Endothelial cell of umbilical vein (primary cell): ENCODE measurements at regions of chr12 and their contacts with region 1.

Region 1: DNA sequence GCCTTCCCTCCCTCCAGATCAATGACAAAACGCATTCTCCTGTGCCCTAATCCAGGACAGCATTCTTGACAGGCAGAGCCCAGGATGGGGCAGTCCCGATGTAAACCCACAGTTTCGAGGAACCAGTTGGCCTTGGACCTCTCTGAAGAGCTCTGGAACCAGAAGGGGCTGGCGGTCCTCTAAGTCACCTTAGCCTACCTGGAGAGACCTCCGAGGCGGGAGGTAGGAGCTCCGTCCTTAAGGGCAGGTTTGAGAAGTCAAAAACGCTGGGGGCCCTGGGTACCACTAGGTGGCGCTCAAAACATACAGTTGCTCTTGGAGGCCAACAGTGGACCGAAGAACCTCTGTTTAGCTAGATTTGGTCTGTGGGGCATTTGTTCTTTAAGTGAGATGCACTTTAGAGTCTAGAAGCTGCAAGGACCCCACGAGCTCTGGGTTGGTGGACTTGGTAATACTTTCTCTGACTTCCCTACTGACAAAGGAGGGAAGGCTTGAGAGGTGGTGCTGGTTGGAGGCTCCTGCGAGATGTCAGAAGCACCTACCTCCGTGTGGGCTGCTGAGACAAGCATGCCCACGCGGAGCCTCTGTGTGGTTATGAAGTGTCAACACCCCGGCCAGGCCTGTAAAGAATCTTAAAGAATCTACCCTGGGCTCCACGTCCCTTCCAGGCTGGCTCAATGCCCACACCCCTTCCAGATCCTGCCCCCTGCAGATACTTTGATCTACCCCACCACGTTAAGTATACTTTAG is 74.8 kb upstream of the CHST11 start:
- DNase-seq: peak; percentile 77
- H3K4me3 ChIP-seq: no peak overlapping the region
- H3K27ac ChIP-seq: no peak overlapping the region
- H3K4me1 ChIP-seq: no peaks in the 10 kb centered on the region
- H3K27me3 ChIP-seq: no peaks in the 10 kb centered on the region
- CTCF ChIP-seq: peak; percentile 90 to 93
- POLR2A ChIP-seq: no peak

Region 2: GRCh38 chr12:104443008-104443407 is 61.1 kb after region 1 on chr12:
- CTCF ChIA-PET with region 1: interaction called, 14 read pairs
- POLR2A ChIA-PET with region 1: no interaction called
- dilution Hi-C with region 1: no loop called
- intact Hi-C with region 1: no loop called
- DNase-seq: no peak
- H3K4me3 ChIP-seq: no peak overlapping the region
- H3K27ac ChIP-seq: no peak overlapping the region
- H3K4me1 ChIP-seq: no peaks in the 10 kb centered on the region
- H3K27me3 ChIP-seq: peaks cover 0 to 7% of the 10 kb centered on the region in 2 experiments
- CTCF ChIP-seq: no peak
- POLR2A ChIP-seq: no peak

Region 3: GRCh38 chr12:104588068-104588920 is 206.4 kb after region 1 on chr12:
- CTCF ChIA-PET with region 1: interaction called, 14 read pairs
- POLR2A ChIA-PET with region 1: no interaction called
- dilution Hi-C with region 1: no loop called
- intact Hi-C with region 1: no loop called
- DNase-seq: peak; percentile 59
- H3K4me3 ChIP-seq: no peak overlapping the region
- H3K27ac ChIP-seq: peak overlapping the region; percentile 49
- H3K4me1 ChIP-seq: peaks cover 13% of the 10 kb centered on the region
- H3K27me3 ChIP-seq: no peaks in the 10 kb centered on the region
- CTCF ChIP-seq: no peak
- POLR2A ChIP-seq: no peak

Region 4: GRCh38 chr12:104727726-104728465 is 346.0 kb after region 1 on chr12:
- CTCF ChIA-PET with region 1: interaction called, 6 read pairs
- POLR2A ChIA-PET with region 1: no interaction called
- dilution Hi-C with region 1: no loop called
- intact Hi-C with region 1: loop called (anchors 5 kb)
- DNase-seq: peak; percentile 15
- H3K4me3 ChIP-seq: no peak overlapping the region
- H3K27ac ChIP-seq: no peak overlapping the region
- H3K4me1 ChIP-seq: peaks cover 13% of the 10 kb centered on the region
- H3K27me3 ChIP-seq: no peaks in the 10 kb centered on the region
- CTCF ChIP-seq: no peak
- POLR2A ChIP-seq: no peak

Region 5: GRCh38 chr12:104834607-104835006 is 452.7 kb after region 1 on chr12:
- CTCF ChIA-PET with region 1: interaction called, 18 read pairs
- POLR2A ChIA-PET with region 1: no interaction called
- dilution Hi-C with region 1: no loop called
- intact Hi-C with region 1: no loop called
- DNase-seq: no peak
- H3K4me3 ChIP-seq: no peak overlapping the region
- H3K27ac ChIP-seq: no peak overlapping the region
- H3K4me1 ChIP-seq: no peaks in the 10 kb centered on the region
- H3K27me3 ChIP-seq: no peaks in the 10 kb centered on the region
- CTCF ChIP-seq: no peak
- POLR2A ChIP-seq: no peak

Region 6: DNA sequence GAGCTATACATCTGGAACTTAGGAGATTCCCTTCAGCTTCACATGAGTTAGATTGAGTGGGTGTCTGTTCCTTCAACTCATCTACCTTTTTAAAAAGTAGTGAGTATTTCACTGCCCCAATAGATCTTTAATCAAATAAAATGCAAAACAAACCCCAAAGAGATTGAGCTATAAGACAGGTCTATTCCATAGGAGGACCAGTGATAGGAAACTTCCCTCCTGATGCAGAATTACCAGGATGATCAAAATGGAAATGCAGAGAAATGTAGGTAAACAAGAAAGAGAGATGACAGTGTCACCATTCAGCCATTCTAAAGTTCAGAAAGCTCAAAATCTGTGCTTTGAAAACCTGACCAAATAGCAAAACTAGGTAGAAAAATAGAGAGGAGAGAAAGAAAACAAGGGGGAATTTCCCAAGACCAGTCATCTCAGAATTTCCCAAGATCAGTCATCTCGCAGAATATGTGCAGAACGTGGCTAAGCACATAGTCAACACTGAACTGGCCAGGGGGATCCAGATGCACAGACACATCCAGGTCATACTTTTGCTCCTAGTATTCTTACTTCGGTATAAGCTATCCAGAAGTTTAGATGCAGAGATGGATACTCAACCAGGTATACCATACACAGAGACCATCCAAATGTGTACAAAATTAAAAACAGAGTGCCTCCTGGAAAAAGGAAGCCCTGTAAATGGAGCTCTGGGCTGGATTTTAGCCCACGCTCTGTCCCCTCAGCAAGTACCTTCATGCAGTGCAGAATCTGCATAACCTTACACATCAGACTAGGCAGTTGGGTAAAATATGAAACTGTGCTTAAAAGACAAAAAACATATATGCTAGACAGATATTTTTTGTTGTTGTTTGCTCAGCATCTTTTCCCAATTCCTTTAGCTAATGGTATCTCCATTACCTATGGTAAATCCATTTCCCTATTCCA is 548.8 kb after region 1 on chr12:
- CTCF ChIA-PET with region 1: interaction called, 11 read pairs
- POLR2A ChIA-PET with region 1: no interaction called
- dilution Hi-C with region 1: no loop called
- intact Hi-C with region 1: no loop called
- DNase-seq: peak; percentile 30
- H3K4me3 ChIP-seq: no peak overlapping the region
- H3K27ac ChIP-seq: no peak overlapping the region
- H3K4me1 ChIP-seq: no peaks in the 10 kb centered on the region
- H3K27me3 ChIP-seq: no peaks in the 10 kb centered on the region
- CTCF ChIP-seq: no peak
- POLR2A ChIP-seq: no peak

Region 7: DNA sequence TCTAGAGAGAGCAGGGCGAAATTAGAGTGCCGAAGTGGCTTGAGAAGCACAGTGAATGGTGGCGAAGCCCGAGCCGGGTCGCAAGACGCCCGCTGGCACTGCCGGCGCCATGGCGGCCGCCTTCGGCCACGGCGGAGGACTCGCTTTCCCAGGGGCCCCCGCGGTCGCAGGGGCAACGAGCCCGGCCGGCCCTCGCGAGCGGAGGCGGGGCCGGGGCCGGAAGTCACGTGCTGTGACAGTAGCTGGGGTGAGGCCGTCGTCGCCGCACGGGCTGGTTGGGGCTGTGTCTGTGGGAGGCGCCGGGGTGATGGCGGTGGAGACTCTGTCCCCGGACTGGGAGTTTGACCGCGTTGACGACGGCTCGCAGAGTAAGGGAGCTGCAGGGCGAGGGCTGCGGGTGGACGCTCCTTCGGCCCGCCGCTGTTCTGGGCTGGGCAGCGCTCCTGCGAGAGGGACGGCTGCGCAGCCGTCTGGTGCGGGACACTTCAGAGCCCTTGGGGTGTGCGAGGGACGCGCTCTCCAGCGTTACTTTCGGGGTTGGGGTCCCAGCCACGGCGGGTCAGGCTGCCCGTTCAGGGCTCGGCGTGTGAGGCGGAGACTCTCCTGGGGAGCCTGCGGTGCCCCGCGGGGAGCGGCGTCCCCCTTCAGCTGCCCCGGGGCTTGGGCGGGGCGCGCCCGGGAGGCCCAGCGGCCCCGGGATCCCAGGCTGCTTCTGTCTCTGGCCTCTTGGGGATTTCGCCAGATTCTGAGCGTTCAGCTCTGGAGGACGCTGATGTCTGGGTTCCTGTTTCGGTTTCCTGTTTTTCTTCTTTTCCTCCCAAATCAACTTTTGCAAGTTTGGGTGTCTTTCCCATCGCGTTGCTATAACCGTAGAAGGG is 725.8 kb after region 1 on chr12 and contains the start of gene WASHC4:
- CTCF ChIA-PET with region 1: interaction called, 14 read pairs
- POLR2A ChIA-PET with region 1: no interaction called
- dilution Hi-C with region 1: no loop called
- intact Hi-C with region 1: no loop called
- DNase-seq: peak; percentile 94
- H3K4me3 ChIP-seq: peak within 1 kb of the TSS; percentile 94 to 99 (median 96)
- H3K27ac ChIP-seq: peak within 1 kb of the TSS; percentile 68
- H3K4me1 ChIP-seq: peaks cover 24% of the 10 kb centered on the region
- H3K27me3 ChIP-seq: no peaks in the 10 kb centered on the region
- CTCF ChIP-seq: peak in 1 of 2 donors; percentile 7
- POLR2A ChIP-seq: peak; percentile 99
- total RNA-seq, gene WASHC4: 99.8 and 123 TPM in 2 replicates

Region 8: DNA sequence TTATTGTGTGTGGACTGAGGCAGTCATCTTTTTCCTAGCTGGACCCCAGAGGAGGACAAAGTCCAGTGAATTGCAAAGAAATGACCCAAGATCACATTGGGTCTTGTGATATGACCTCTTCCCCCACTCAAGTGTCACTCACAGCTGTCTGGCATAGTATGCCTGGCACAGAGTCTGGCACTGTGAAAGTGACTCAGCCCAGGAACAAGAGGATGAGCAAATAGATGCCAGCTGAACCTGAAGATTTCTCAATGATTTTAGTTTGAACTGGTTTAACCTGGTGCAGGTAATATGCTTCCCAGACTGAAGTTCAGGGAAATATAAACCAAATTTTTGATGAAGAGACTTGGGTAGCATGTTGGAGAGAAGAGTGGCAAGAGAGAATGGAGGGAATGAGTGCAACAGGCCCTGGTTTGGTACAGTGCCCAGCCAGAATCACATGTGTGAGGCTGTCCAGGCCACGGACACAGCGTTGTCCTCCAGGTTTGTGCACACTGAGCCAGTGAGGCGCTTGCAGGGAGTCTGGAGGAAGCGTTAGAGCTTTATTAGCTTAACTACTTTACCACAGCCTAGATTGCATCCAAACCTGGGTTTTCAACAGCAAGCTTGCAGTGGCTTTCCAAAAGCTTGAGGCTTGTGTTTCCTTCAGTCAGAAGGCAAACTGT is 1424.0 kb after region 1 on chr12:
- CTCF ChIA-PET with region 1: no interaction called
- POLR2A ChIA-PET with region 1: no interaction called
- dilution Hi-C with region 1: no loop called
- intact Hi-C with region 1: no loop called
- DNase-seq: no peak
- H3K4me3 ChIP-seq: no peak overlapping the region
- H3K27ac ChIP-seq: no peak overlapping the region
- H3K4me1 ChIP-seq: no peaks in the 10 kb centered on the region
- H3K27me3 ChIP-seq: peaks cover 7 to 19% of the 10 kb centered on the region in 2 experiments
- CTCF ChIP-seq: no peak
- POLR2A ChIP-seq: no peak